CD8-positive, alpha-beta T cell (primary cell): ENCODE measurements at regions of chr14 and their contacts with region 1.

Region 1: GRCh38 chr14:52729925-52730667 is at the start of gene STYX:
- DNase-seq: peak; percentile 97 to 99 (median 98)
- ATAC-seq: peak; percentile 96
- H3K4me3 ChIP-seq: peak within 1 kb of the TSS; percentile 87 to 98
- H3K4me3 Mint-ChIP-seq: peak within 1 kb of the TSS; percentile 89
- H3K27ac ChIP-seq: peak within 1 kb of the TSS; percentile 86
- H3K27ac Mint-ChIP-seq: peak within 1 kb of the TSS; percentile 93
- H3K4me1 ChIP-seq: peaks cover 17% of the 10 kb centered on the region
- H3K4me1 Mint-ChIP-seq: peaks cover 35% of the 10 kb centered on the region
- H3K27me3 ChIP-seq: no peaks in the 10 kb centered on the region
- H3K27me3 Mint-ChIP-seq: no peaks in the 10 kb centered on the region
- CTCF ChIP-seq: no peak
- total RNA-seq, gene STYX: 15.9 to 16.6 TPM

Region 2: DNA sequence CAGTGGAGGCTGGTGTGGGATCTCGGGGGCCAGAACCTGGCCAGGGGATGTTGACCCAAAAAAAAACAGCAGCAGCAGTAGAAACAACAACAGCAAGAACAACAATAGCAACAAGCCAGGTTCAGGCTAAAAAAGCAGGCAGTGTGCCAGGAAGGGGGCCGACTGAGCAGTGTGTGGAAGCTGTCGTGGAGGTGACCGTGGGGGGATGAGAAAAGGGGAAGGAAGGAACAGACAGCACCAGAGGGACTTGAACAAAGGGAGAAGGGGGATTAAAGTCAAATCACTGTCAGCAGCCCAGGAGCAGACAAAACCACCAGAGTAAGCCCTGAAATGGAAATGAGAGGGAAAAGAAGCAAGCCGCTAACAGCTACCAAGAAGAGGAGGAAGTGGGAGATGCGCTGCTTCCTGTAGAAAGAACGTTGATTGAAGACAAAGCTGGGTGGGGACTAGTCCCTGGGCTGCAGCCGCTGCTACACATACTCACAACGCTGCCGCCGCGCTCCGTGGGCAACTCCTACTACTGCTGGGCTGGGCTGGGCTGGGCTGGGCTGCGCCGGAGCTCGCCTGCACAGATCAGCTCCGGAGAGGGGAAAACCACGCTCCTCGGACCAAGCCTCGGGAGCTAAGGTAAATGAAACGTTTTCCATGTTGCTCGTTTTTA is 869.8 kb before region 1 on chr14 and contains the start of gene GNG2:
- CTCF ChIA-PET with region 1: no interaction called
- POLR2A ChIA-PET with region 1: no interaction called
- intact Hi-C with region 1: loop called in 1 of 2 experiments (anchors 10 kb)
- DNase-seq: peak; percentile 71 to 94 (median 83)
- ATAC-seq: peak; percentile 95
- H3K4me3 ChIP-seq: peak within 1 kb of the TSS; percentile 86 to 90
- H3K4me3 Mint-ChIP-seq: peak within 1 kb of the TSS; percentile 98
- H3K27ac ChIP-seq: peak within 1 kb of the TSS; percentile 88
- H3K27ac Mint-ChIP-seq: peak within 1 kb of the TSS; percentile 95
- H3K4me1 ChIP-seq: peaks cover 50% of the 10 kb centered on the region
- H3K4me1 Mint-ChIP-seq: peaks cover 66% of the 10 kb centered on the region
- H3K27me3 ChIP-seq: no peaks in the 10 kb centered on the region
- H3K27me3 Mint-ChIP-seq: no peaks in the 10 kb centered on the region
- CTCF ChIP-seq: no peak
- total RNA-seq, gene GNG2: 166 to 169 TPM

Region 3: GRCh38 chr14:52458721-52459085 is 271.4 kb before region 1 on chr14:
- CTCF ChIA-PET with region 1: no interaction called
- POLR2A ChIA-PET with region 1: no interaction called
- intact Hi-C with region 1: no loop called
- DNase-seq: no peak
- ATAC-seq: no peak
- H3K4me3 ChIP-seq: no peak overlapping the region
- H3K4me3 Mint-ChIP-seq: no peak overlapping the region
- H3K27ac ChIP-seq: no peak overlapping the region
- H3K27ac Mint-ChIP-seq: no peak overlapping the region
- H3K4me1 ChIP-seq: no peaks in the 10 kb centered on the region
- H3K4me1 Mint-ChIP-seq: peaks cover 5% of the 10 kb centered on the region
- H3K27me3 ChIP-seq: no peaks in the 10 kb centered on the region
- H3K27me3 Mint-ChIP-seq: no peaks in the 10 kb centered on the region
- CTCF ChIP-seq: no peak

Region 4: GRCh38 chr14:52695481-52696091 is 34.5 kb before region 1 on chr14 and contains the start of gene ERO1A:
- CTCF ChIA-PET with region 1: no interaction called
- POLR2A ChIA-PET with region 1: interaction called, 4 read pairs
- intact Hi-C with region 1: loop called (anchors 1 to 5 kb)
- DNase-seq: peak; percentile 20 to 78 (median 61)
- ATAC-seq: peak; percentile 61
- H3K4me3 ChIP-seq: peak within 1 kb of the TSS; percentile 63 to 89
- H3K4me3 Mint-ChIP-seq: peak within 1 kb of the TSS; percentile 97
- H3K27ac ChIP-seq: peak within 1 kb of the TSS; percentile 69 to 78
- H3K27ac Mint-ChIP-seq: peak within 1 kb of the TSS; percentile 96
- H3K4me1 ChIP-seq: peaks cover 34% of the 10 kb centered on the region
- H3K4me1 Mint-ChIP-seq: peaks cover 43% of the 10 kb centered on the region
- H3K27me3 ChIP-seq: no peaks in the 10 kb centered on the region
- H3K27me3 Mint-ChIP-seq: no peaks in the 10 kb centered on the region
- CTCF ChIP-seq: no peak
- total RNA-seq, gene ERO1A: 55.3 to 55.4 TPM

Region 5: GRCh38 chr14:52706724-52707706 is 23.1 kb before region 1 on chr14 and contains the start of gene PSMC6:
- CTCF ChIA-PET with region 1: interaction called, 4 read pairs
- POLR2A ChIA-PET with region 1: interaction called, 3 read pairs
- intact Hi-C with region 1: loop called (anchors 1 kb)
- DNase-seq: peak; percentile 91 to 96 (median 95)
- ATAC-seq: peak; percentile 98
- H3K4me3 ChIP-seq: peak within 1 kb of the TSS; percentile 69 to 88
- H3K4me3 Mint-ChIP-seq: peak within 1 kb of the TSS; percentile 96
- H3K27ac ChIP-seq: peak within 1 kb of the TSS; percentile 66 to 84
- H3K27ac Mint-ChIP-seq: peak within 1 kb of the TSS; percentile 94
- H3K4me1 ChIP-seq: peaks cover 20% of the 10 kb centered on the region
- H3K4me1 Mint-ChIP-seq: peaks cover 33% of the 10 kb centered on the region
- H3K27me3 ChIP-seq: no peaks in the 10 kb centered on the region
- H3K27me3 Mint-ChIP-seq: no peaks in the 10 kb centered on the region
- CTCF ChIP-seq: no peak
- total RNA-seq, gene PSMC6: 108 to 122 TPM

Region 6: GRCh38 chr14:52741865-52742264 is 11.8 kb after region 1 on chr14:
- CTCF ChIA-PET with region 1: interaction called, 6 read pairs
- POLR2A ChIA-PET with region 1: interaction called, 39 read pairs
- intact Hi-C with region 1: loop called (anchors 1 kb)
- DNase-seq: peak in 2 of 9 experiments; percentile 37 to 69
- ATAC-seq: peak; percentile 56
- H3K4me3 ChIP-seq: peak overlapping the region; percentile 37 to 42
- H3K4me3 Mint-ChIP-seq: peak overlapping the region; percentile 75
- H3K27ac ChIP-seq: peak overlapping the region; percentile 61 to 87
- H3K27ac Mint-ChIP-seq: peak overlapping the region; percentile 98
- H3K4me1 ChIP-seq: peaks cover 63% of the 10 kb centered on the region
- H3K4me1 Mint-ChIP-seq: peaks cover 76% of the 10 kb centered on the region
- H3K27me3 ChIP-seq: no peaks in the 10 kb centered on the region
- H3K27me3 Mint-ChIP-seq: no peaks in the 10 kb centered on the region
- CTCF ChIP-seq: no peak

Region 7: GRCh38 chr14:52791203-52792096 is 61.4 kb after region 1 on chr14 and contains the start of gene GNPNAT1:
- CTCF ChIA-PET with region 1: no interaction called
- POLR2A ChIA-PET with region 1: interaction called, 4 read pairs
- intact Hi-C with region 1: loop called (anchors 1 to 2 kb)
- DNase-seq: peak; percentile 80 to 97 (median 88)
- ATAC-seq: peak; percentile 96
- H3K4me3 ChIP-seq: peak within 1 kb of the TSS; percentile 78 to 85
- H3K4me3 Mint-ChIP-seq: peak within 1 kb of the TSS; percentile 93
- H3K27ac ChIP-seq: peak within 1 kb of the TSS; percentile 65 to 74
- H3K27ac Mint-ChIP-seq: peak within 1 kb of the TSS; percentile 89
- H3K4me1 ChIP-seq: peaks cover 20% of the 10 kb centered on the region
- H3K4me1 Mint-ChIP-seq: peaks cover 40% of the 10 kb centered on the region
- H3K27me3 ChIP-seq: no peaks in the 10 kb centered on the region
- H3K27me3 Mint-ChIP-seq: no peaks in the 10 kb centered on the region
- CTCF ChIP-seq: no peak
- total RNA-seq, gene GNPNAT1: 5.6 to 7.5 TPM

Region 8: DNA sequence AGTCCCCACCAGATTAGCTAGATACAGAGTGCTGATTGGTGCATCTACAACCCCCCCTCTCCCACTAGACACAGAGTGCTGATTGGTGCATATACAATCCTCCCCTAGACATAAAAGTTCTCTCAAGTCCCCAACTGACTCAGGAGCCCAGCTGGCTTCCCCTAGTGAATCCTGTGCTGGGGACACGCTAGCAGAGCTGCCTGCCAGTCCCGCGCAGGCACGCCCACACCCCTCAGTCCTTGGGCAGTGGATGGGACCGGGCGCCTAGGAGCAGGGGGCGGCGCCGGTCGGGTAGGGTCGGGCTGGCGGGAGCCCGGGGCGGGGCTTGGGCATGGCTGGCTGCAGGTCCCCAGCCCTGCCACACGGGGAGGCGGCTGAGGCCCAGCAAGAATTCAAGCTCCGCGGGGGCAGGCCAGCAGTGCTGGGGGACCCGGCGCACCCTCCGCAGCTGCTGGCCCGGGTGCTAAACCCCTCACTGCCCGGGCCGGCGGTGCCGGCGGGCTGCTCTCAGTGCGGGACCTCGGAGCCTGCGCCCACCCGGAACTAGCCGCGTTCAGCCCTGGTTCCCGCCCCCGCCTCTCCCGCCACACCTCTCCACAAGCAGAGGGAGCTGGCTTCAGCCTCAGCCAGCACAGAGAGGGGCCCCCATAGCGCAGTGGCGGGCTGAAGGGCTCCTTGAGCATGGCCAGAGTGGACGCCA is 487.3 kb after region 1 on chr14:
- CTCF ChIA-PET with region 1: no interaction called
- POLR2A ChIA-PET with region 1: no interaction called
- intact Hi-C with region 1: loop called in 1 of 2 experiments (anchors 2 kb)
- DNase-seq: peak; percentile 48 to 81 (median 71)
- ATAC-seq: peak; percentile 95
- H3K4me3 ChIP-seq: peak overlapping the region; percentile 61 to 65
- H3K4me3 Mint-ChIP-seq: peak overlapping the region; percentile 91
- H3K27ac ChIP-seq: no peak overlapping the region
- H3K27ac Mint-ChIP-seq: peak overlapping the region; percentile 53
- H3K4me1 ChIP-seq: peaks cover 6% of the 10 kb centered on the region
- H3K4me1 Mint-ChIP-seq: peaks cover 9% of the 10 kb centered on the region
- H3K27me3 ChIP-seq: no peaks in the 10 kb centered on the region
- H3K27me3 Mint-ChIP-seq: no peaks in the 10 kb centered on the region
- CTCF ChIP-seq: peak; percentile 48